CD14-positive monocyte (primary cell): ENCODE measurements at regions of chr12 and their contacts with region 1.

Region 1: GRCh38 chr12:57238854-57239554 is 9.5 kb downstream of the SHMT2 start:
- DNase-seq: peak; percentile 86 to 88 (median 87)
- H3K4me3 ChIP-seq: peak overlapping the region; percentile 0 to 75 (median 12)
- H3K4me3 Mint-ChIP-seq: peak overlapping the region; percentile 84 to 99
- H3K27ac ChIP-seq: no peak overlapping the region
- H3K27ac Mint-ChIP-seq: peak overlapping the region in 3 of 7 donors; percentile 14 to 50 (median 40)
- H3K4me1 ChIP-seq: peaks cover 69 to 78% of the 10 kb centered on the region in 2 donors
- H3K4me1 Mint-ChIP-seq: peaks cover 76% of the 10 kb centered on the region
- H3K27me3 ChIP-seq: peaks cover 67 to 83% of the 10 kb centered on the region in 2 donors
- H3K27me3 Mint-ChIP-seq: peaks cover 82 to 95% (median 84%) of the 10 kb centered on the region in 3 donors
- CTCF ChIP-seq: peak; percentile 100

Region 2: GRCh38 chr12:57213058-57213715 is 25.8 kb before region 1 on chr12:
- intact Hi-C with region 1: loop called in 1 of 2 experiments (anchors 1 kb)
- DNase-seq: peak; percentile 74 to 77 (median 76)
- H3K4me3 ChIP-seq: no peak overlapping the region
- H3K4me3 Mint-ChIP-seq: peak overlapping the region in 1 of 2 donors; percentile 84
- H3K27ac ChIP-seq: no peak overlapping the region
- H3K27ac Mint-ChIP-seq: peak overlapping the region in 1 of 7 donors; percentile 44
- H3K4me1 ChIP-seq: peaks cover 26 to 41% of the 10 kb centered on the region in 2 donors
- H3K4me1 Mint-ChIP-seq: peaks cover 33% of the 10 kb centered on the region
- H3K27me3 ChIP-seq: peaks cover 38 to 45% of the 10 kb centered on the region in 2 donors
- H3K27me3 Mint-ChIP-seq: peaks cover 42 to 49% (median 47%) of the 10 kb centered on the region in 3 donors
- CTCF ChIP-seq: peak; percentile 91

Region 3: DNA sequence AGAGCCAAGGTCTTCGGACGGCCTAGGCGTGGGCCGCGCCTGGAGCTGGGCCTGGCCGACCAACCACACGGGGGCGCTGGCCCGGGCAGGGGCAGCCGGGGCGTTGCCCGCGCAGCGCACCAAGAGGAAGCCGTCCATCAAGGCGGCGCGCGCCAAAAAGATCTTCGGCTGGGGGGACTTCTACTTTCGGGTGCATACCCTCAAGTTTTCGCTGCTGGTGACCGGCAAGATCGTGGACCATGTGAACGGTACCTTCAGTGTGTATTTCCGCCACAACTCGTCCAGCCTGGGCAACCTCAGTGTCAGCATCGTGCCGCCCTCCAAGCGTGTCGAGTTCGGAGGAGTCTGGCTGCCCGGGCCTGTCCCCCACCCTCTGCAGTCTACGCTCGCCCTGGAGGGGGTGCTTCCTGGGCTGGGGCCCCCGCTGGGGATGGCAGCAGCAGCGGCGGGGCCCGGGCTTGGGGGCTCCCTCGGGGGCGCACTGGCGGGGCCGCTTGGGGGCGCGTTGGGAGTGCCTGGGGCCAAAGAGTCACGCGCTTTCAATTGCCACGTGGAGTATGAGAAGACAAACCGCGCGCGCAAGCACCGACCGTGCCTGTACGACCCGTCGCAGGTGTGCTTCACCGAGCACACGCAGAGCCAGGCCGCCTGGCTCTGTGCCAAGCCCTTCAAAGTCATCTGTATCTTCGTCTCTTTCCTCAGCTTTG is 13.9 kb before region 1 on chr12:
- intact Hi-C with region 1: loop called in 1 of 2 experiments (anchors 2 kb)
- DNase-seq: peak; percentile 70 to 77 (median 74)
- H3K4me3 ChIP-seq: peak overlapping the region in 1 of 3 experiments; percentile 52
- H3K4me3 Mint-ChIP-seq: peak overlapping the region; percentile 58 to 89
- H3K27ac ChIP-seq: no peak overlapping the region
- H3K27ac Mint-ChIP-seq: no peak overlapping the region
- H3K4me1 ChIP-seq: peaks cover 33 to 43% of the 10 kb centered on the region in 2 donors
- H3K4me1 Mint-ChIP-seq: peaks cover 52% of the 10 kb centered on the region
- H3K27me3 ChIP-seq: peaks cover 69 to 79% of the 10 kb centered on the region in 2 donors
- H3K27me3 Mint-ChIP-seq: peaks cover 73 to 87% (median 86%) of the 10 kb centered on the region in 3 donors
- CTCF ChIP-seq: peak; percentile 88

Region 4: GRCh38 chr12:57272337-57273151 is 33.5 kb after region 1 on chr12:
- intact Hi-C with region 1: no loop called
- DNase-seq: no peak
- H3K4me3 ChIP-seq: no peak overlapping the region
- H3K4me3 Mint-ChIP-seq: no peak overlapping the region
- H3K27ac ChIP-seq: no peak overlapping the region
- H3K27ac Mint-ChIP-seq: peak overlapping the region in 2 of 7 donors; percentile 3 to 78
- H3K4me1 ChIP-seq: peaks cover 8 to 11% of the 10 kb centered on the region in 2 donors
- H3K4me1 Mint-ChIP-seq: peaks cover 13% of the 10 kb centered on the region
- H3K27me3 ChIP-seq: no peaks in the 10 kb centered on the region
- H3K27me3 Mint-ChIP-seq: no peaks in the 10 kb centered on the region
- CTCF ChIP-seq: no peak

Region 5: DNA sequence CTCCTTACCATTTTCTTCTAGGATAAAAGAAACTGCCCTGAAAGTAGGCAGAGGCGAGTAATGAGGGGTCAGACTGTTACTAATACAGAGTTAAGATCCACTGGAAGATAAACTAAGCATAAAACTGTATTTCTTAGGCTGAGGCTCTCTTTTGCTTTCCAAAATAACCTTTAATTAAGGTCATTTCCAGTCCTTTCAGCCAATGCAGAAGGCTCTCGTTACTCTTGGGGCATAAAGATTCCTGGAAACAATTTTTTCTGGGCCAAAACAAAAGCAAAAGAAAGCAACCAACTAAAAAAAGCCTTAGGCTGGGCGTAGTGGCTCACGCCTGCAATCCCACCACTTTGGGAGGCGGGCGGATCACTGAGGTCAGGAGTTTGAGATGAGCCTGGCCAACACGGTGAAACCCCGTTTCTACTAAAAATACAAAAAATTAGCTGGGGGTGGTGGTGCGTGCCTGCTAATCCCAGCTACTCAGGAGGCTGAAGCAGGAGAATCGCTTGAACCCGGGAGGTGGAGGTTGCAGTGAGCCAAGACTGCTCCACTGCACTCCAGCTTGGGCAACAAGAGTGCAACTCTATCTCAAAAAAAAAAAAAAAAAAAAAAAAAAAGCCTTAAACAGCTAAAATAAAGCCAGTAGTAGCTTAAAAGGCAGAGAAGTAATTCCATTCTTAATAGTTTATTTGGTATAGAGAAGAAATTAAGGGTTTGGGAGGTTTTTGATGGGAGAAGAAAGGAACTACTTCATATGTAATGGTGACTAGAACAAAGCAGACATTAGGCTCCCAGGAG is 80.9 kb after region 1 on chr12:
- intact Hi-C with region 1: no loop called
- DNase-seq: no peak
- H3K4me3 ChIP-seq: no peak overlapping the region
- H3K4me3 Mint-ChIP-seq: no peak overlapping the region
- H3K27ac ChIP-seq: no peak overlapping the region
- H3K27ac Mint-ChIP-seq: no peak overlapping the region
- H3K4me1 ChIP-seq: no peaks in the 10 kb centered on the region
- H3K4me1 Mint-ChIP-seq: no peaks in the 10 kb centered on the region
- H3K27me3 ChIP-seq: no peaks in the 10 kb centered on the region
- H3K27me3 Mint-ChIP-seq: peaks cover 0 to 2% (median 0%) of the 10 kb centered on the region in 3 donors
- CTCF ChIP-seq: no peak